K562 (cell line): ENCODE measurements at regions of chr7 and their contacts with region 1.

Region 1: GRCh38 chr7:106659963-106660861 is 746 bp downstream of the CCDC71L start:
- DNase-seq: peak; percentile 89 to 94 (median 90)
- ATAC-seq: peak; percentile 78
- H3K4me3 ChIP-seq: peak overlapping the region; percentile 73
- H3K27ac ChIP-seq: peak overlapping the region; percentile 92
- H3K4me1 ChIP-seq: peaks cover 11 to 38% of the 10 kb centered on the region in 2 experiments; a peak in 4 of 5 replicates
- H3K27me3 ChIP-seq: no peaks in the 10 kb centered on the region
- CTCF ChIP-seq: peak; percentile 97 to 99 (median 98)
- EP300 ChIP-seq: peak; percentile 68
- POLR2A ChIP-seq: peak; percentile 55
- RAD21 ChIP-seq: peak; percentile 91 to 98

Region 2: DNA sequence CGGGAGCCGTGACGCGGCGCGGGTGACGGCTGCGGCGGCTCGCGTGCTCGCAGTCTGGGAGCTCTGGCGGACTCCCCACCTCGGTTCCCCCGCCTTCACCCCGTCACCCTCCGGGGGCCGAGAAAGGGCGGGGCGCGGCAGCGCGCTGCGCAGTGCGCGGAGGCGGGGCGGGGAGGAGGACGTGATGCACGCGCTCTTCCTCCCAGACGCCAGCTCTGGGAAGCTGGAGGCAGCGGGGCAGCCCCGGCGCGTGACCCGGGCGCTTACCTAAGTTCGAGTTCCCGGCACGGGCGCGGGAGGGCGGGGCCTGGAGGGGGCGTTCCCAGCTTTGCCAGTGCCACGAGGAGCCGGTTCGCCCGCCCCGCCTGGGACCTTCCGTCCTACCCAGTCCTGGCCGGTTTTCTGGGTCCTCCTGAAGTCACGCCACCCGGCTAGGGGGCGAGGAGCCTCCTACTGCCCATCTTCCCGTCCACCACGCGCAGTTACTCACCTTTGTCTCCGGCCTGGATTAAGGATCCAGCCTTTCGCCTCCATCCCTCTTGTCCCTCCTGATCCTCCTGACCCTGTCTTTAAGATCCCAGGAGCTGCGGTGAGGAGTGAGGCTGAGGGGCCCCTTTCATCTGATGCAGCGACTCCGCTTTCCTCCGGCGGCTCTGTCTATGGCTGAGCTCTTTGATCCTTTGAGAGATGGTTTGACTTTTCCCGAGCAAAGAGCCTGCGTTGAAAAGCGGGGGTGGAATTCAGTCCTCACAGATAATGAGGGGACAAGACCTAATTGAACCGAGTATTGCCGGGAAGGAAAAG is 375.0 kb before region 1 on chr7:
- CTCF ChIA-PET with region 1: no interaction called
- POLR2A ChIA-PET with region 1: interaction called, 6 read pairs
- in situ Hi-C with region 1: no loop called
- intact Hi-C with region 1: loop called (anchors 2 kb)
- DNase-seq: peak; percentile 98 to 100 (median 98)
- ATAC-seq: peak; percentile 87
- H3K4me3 ChIP-seq: peak overlapping the region; percentile 73
- H3K27ac ChIP-seq: peak overlapping the region; percentile 91
- H3K4me1 ChIP-seq: peaks cover 11 to 28% of the 10 kb centered on the region in 2 experiments
- H3K27me3 ChIP-seq: no peaks in the 10 kb centered on the region
- CTCF ChIP-seq: 0 out of 6 replicates have a peak, but pooled peaks of 1 of the 3 experiments have one; percentile 3
- EP300 ChIP-seq: peak; percentile 20; the same call in 1 of the 2 replicates
- POLR2A ChIP-seq: peak; percentile 94
- RAD21 ChIP-seq: peak in 1 of 2 experiments; percentile 18; a peak in 1 of 4 replicates

Region 3: GRCh38 chr7:106568680-106569499 is 91.3 kb before region 1 on chr7:
- CTCF ChIA-PET with region 1: no interaction called
- POLR2A ChIA-PET with region 1: interaction called, 17 read pairs
- in situ Hi-C with region 1: loop called (anchors 10 kb)
- intact Hi-C with region 1: loop called (anchors 1 kb)
- DNase-seq: peak; percentile 94 to 100 (median 95)
- ATAC-seq: peak; percentile 88
- H3K4me3 ChIP-seq: no peak overlapping the region
- H3K27ac ChIP-seq: peak overlapping the region; percentile 99
- H3K4me1 ChIP-seq: peaks cover 39 to 75% of the 10 kb centered on the region in 2 experiments
- H3K27me3 ChIP-seq: no peaks in the 10 kb centered on the region
- CTCF ChIP-seq: peak; percentile 40 to 51 (median 48); a peak in 5 of 6 replicates
- EP300 ChIP-seq: peak; percentile 100
- POLR2A ChIP-seq: peak; percentile 53; the same call in 1 of the 2 replicates
- RAD21 ChIP-seq: peak; percentile 69 to 72

Region 4: DNA sequence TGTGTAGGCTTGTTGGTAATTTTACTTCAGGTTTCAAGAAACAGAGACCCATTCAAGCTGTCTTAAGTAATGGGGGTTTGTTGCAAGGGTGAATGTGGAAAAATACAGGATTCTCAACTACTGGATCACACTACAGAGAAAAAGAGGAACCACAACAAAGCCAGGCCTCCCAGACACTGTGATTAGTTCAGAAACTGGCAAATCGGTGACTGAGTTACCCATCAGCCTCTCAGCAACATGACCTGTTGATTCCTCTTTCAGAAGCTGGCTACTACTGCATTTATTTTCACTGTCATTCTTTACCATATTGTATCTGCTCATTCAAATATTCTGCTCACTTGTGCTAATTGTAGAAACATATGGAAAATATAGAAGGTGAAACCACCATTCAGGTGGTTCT is 15.2 kb before region 1 on chr7:
- CTCF ChIA-PET with region 1: no interaction called
- POLR2A ChIA-PET with region 1: interaction called, 37 read pairs
- in situ Hi-C with region 1: no loop called
- intact Hi-C with region 1: no loop called
- DNase-seq: no peak
- ATAC-seq: peak; percentile 55; the same call in 1 of the 3 replicates
- H3K4me3 ChIP-seq: no peak overlapping the region
- H3K27ac ChIP-seq: no peak overlapping the region
- H3K4me1 ChIP-seq: no peaks in the 10 kb centered on the region; a peak in 1 of 5 replicates
- H3K27me3 ChIP-seq: no peaks in the 10 kb centered on the region
- CTCF ChIP-seq: no peak
- EP300 ChIP-seq: no peak
- POLR2A ChIP-seq: no peak
- RAD21 ChIP-seq: no peak

Region 5: DNA sequence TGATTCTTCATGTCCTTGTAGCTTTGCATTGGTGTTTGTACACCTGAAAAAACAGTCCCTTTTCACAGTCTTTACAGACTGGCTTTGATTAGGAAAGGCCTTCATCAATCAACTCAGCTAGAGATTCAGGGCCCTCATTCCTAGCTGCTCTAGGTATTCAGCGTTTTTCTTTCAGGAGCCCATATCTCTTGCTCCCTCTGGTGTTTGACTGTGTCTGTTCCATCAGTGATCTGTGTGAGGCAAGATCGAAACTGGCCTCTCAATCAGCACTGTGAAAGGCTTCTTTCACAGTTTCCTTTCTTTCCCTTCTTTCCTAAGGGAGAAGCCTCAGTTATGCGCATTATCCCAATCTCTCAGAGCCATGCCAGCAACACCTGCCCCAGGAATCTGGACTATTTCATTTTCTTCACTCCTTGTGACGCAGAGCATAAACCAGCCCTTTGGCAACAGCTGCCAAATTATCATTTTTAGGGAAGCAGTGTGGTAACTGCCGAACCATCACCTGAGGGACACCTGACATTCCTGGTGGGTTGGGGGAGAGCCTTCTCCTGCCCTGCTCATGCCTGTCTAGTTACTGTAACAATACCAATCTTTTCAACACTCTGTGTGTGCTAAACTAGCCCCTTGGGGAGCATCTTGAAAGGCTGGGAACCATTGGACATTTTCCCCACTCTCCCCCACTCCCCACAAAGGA is 76.4 kb after region 1 on chr7:
- CTCF ChIA-PET with region 1: interaction called, 115 read pairs
- POLR2A ChIA-PET with region 1: interaction called, 17 read pairs
- in situ Hi-C with region 1: loop called (anchors 5 kb)
- intact Hi-C with region 1: loop called (anchors 1 kb)
- DNase-seq: peak; percentile 43 to 80 (median 64)
- ATAC-seq: peak; percentile 94
- H3K4me3 ChIP-seq: no peak overlapping the region
- H3K27ac ChIP-seq: peak overlapping the region; percentile 18; the same call in 1 of the 3 replicates
- H3K4me1 ChIP-seq: peaks cover 0 to 16% of the 10 kb centered on the region in 2 experiments; a peak in 2 of 5 replicates
- H3K27me3 ChIP-seq: no peaks in the 10 kb centered on the region
- CTCF ChIP-seq: peak; percentile 83 to 92 (median 90)
- EP300 ChIP-seq: peak; percentile 57; the same call in 1 of the 2 replicates
- POLR2A ChIP-seq: no peak
- RAD21 ChIP-seq: peak; percentile 97 to 99

Region 6: GRCh38 chr7:107007007-107007891 is 347.0 kb after region 1 on chr7:
- CTCF ChIA-PET with region 1: no interaction called
- POLR2A ChIA-PET with region 1: no interaction called
- in situ Hi-C with region 1: no loop called
- intact Hi-C with region 1: loop called (anchors 5 kb)
- DNase-seq: peak; percentile 87 to 99 (median 91)
- ATAC-seq: peak; percentile 85
- H3K4me3 ChIP-seq: peak overlapping the region; percentile 39
- H3K27ac ChIP-seq: peak overlapping the region; percentile 96
- H3K4me1 ChIP-seq: peaks cover 37 to 44% of the 10 kb centered on the region in 2 experiments
- H3K27me3 ChIP-seq: no peaks in the 10 kb centered on the region
- CTCF ChIP-seq: peak in 2 of 3 experiments; percentile 12 to 30; a peak in 2 of 6 replicates
- EP300 ChIP-seq: peak; percentile 99
- POLR2A ChIP-seq: peak; percentile 68
- RAD21 ChIP-seq: peak; percentile 50 to 57